Heart right ventricle (tissue), 16 donors: ENCODE measurements at regions of chr17 and their contacts with region 1.

Region 1: GRCh38 chr17:58432806-58433572 is 15.7 kb upstream of the RNF43 start:
- DNase-seq: no peak
- ATAC-seq: no peak
- H3K4me3 ChIP-seq: no peak overlapping the region
- H3K27ac ChIP-seq: no peak overlapping the region
- H3K4me1 ChIP-seq: no peaks in the 10 kb centered on the region
- H3K27me3 ChIP-seq: peaks cover 0 to 25% (median 0%) of the 10 kb centered on the region in 7 donors
- CTCF ChIP-seq: no peak

Region 2: DNA sequence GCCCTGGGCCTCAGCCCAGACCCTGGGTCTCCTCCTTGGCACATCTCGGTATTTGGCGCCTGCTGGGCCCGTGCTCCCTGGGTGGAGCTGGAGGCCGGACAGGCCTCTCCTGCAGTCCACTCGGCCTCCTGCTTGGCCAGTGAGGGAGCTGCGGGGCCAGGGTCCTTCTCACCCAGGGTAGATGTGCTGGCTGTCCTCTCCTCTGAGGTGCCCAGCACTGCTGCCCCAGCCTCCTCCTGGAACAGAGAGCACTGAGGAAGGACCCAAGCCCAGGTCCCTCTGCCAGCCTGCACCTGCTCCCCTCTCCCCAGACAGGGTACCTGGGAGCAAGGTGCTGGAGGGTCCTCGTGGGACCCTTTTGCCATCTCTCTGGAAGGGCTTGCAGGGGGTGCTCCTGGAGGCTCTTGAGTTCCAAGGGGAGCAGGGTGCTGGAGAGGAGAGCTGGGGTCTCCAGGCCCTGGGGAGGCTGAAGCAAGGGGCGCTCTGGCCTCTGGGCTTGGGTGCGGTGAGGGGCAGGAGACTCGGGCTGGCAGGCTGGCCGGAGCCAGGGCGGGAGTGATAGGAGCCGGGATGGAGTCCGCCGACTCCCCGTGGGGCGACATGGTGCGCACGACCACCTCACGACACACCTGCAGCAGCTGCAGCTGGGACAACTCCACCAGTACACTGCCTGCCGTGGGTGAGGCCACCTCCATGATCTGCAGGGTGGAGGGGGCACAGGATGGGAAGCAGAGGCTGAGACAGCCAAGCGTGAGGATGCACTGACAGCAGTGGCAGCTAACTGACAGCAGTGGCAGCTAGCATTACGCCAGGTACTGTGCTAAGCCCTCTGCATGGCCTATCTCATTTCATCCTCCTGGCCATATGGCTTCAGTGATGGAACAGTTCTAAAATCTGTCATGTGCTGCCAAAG is 122.2 kb before region 1 on chr17:
- intact Hi-C with region 1: loop called in 1 of 10 experiments (anchors 5 kb)
- DNase-seq: no peak
- ATAC-seq: peak in 1 of 8 donors; percentile 7
- H3K4me3 ChIP-seq: no peak overlapping the region
- H3K27ac ChIP-seq: no peak overlapping the region
- H3K4me1 ChIP-seq: no peaks in the 10 kb centered on the region
- H3K27me3 ChIP-seq: no peaks in the 10 kb centered on the region
- CTCF ChIP-seq: no peak